ENCODE measurements at regions of chr20 and their contacts with region 1.

Region 1: GRCh38 chr20:58209652-58210397 is 18.6 kb downstream of the ANKRD60 start:
- DNase-seq: no peak
- H3K4me3 ChIP-seq: no peak overlapping the region
- H3K27me3 ChIP-seq: peaks cover 10% of the 10 kb centered on the region
- CTCF ChIP-seq: peak; percentile 100

Region 2: DNA sequence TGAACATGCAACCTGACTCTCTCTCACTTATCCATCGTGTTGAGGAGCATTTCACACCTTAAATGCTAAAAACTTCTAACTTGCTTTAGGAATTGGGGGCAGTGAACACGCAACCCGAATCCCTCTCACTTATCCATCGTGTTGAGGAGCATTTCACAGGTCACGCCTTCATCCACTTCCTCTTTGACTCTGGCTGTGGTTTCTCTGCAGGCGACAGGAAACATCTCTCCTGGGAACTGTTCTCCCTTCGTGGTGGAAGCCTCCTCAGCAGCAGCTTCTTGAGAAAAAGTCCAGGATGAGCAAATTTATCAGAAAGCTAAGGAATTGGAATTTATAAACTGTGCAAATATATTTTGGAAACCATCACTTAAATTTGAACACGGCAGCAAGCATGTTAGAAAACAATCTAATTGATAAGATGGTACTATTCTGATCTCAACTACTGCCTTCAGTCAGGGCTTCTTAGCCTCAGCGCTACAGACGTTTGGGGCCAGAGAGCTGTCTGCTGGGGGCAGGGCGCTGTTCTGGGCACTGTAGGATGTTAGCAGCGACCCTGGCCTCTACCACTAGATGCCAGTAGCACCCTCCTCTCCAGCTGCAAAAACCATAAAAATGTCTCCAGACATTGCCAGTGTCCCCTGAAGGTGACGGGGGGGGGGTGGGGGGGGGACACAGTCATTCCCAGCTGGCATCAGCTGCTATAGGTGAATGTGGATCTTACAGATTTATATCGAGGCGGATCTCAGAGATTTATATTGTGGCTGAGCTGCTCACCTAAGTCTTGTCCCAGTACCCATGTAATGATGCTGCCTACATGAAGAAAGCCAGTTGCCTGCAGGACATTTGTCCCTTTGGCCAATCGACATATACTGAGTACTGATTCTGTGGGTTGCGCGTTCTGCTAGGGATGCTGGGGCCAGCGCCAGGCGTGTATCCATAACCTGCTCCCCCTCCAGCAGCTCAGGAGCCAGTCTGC is 711.1 kb before region 1 on chr20:
- CTCF ChIA-PET with region 1: interaction called, 13 read pairs
- POLR2A ChIA-PET with region 1: no interaction called
- DNase-seq: no peak
- H3K4me3 ChIP-seq: no peak overlapping the region
- H3K27me3 ChIP-seq: no peaks in the 10 kb centered on the region; the same call in 1 of the 2 replicates
- CTCF ChIP-seq: peak; percentile 61

Region 3: GRCh38 chr20:57514273-57514751 is 695.5 kb before region 1 on chr20:
- CTCF ChIA-PET with region 1: interaction called, 21 read pairs
- POLR2A ChIA-PET with region 1: no interaction called
- DNase-seq: no peak
- H3K4me3 ChIP-seq: no peak overlapping the region
- H3K27me3 ChIP-seq: peaks cover 10% of the 10 kb centered on the region
- CTCF ChIP-seq: peak; percentile 79

Region 4: DNA sequence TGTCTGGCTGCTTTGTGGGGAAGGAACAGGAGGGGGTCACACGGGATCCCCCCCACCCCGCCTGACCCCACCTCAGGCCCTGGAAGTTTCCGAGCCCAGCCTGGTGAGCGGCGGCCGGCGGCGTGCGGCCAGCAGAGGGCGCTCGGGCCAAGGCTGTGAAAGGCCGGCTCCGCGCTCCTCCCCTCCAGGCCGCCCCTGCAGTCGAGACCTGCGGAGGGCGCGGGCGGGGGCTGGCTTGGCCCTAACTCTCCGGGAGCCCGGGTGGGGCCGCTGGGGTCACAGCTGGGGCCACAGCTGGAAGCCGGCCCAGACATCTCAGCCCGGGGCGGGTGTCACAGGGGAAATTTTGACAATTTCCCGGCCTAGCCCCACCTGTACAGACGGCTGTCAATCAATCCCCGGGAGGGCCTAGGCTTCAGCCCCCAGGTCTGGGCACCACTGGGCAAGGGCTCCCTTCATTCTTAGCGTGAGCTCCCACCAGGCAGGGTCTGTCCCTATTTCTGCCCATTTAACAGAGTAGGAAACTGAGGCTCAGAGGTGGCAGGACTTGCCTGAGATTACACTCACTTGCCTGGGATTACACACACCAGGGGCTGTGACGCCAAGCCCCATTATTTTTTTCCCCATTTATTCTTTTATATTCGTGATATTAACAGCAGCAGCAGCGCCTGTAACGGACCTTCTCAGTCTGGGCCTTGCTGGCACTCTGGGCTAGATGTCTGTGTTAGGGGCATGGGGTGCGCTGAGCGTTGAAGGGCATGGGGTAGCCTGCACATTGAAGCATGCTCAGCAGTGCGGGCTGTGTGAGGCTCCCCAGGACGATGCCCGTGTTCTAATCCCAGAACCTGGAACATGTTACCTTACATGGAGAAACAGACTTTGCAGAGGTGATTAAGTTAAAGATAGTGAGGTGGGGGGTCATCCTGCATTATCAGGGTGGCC is 612.6 kb before region 1 on chr20:
- CTCF ChIA-PET with region 1: interaction called, 222 read pairs
- POLR2A ChIA-PET with region 1: no interaction called
- DNase-seq: no peak
- H3K4me3 ChIP-seq: no peak overlapping the region
- H3K27me3 ChIP-seq: no peaks in the 10 kb centered on the region; the same call in none of the 2 replicates
- CTCF ChIP-seq: peak; percentile 76

Region 5: DNA sequence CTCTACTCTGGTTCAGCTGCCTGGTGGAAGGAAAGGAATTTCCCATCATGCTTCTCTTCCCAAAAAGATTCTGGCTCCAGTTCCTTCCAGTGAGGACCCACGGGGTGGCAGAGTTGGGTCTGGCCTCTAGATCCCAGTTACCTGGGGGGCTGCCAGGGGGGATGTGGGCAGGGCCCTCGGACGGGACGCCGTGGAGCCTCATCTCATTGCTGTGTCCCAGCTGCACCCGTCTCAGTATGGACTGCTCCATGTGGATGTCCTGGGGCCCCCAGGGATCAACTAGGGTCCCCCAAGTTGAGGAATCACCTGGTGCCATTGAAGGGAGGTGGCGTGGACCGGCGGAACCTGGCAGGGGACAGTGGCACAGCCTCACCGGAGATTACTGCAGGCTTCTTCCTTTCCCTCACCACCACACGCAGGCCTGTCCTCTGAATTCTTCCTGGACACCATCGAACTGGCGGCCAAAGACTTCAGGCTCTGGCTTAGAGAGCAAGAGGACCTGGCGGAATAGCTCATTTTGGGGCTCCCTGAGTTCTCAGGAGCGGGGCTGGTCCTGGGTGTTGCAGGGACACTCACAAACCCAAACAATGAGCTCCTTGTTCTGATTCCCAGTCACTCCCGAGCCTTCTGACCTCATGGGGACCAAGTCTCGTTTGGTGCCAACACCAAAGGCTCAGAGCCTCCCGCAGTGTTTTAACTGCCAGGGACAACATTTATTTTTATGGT is 598.1 kb before region 1 on chr20:
- CTCF ChIA-PET with region 1: interaction called, 16 read pairs
- POLR2A ChIA-PET with region 1: no interaction called
- DNase-seq: no peak
- H3K4me3 ChIP-seq: no peak overlapping the region
- H3K27me3 ChIP-seq: peaks cover 1% of the 10 kb centered on the region; the same call in 1 of the 2 replicates
- CTCF ChIP-seq: no peak

Region 6: GRCh38 chr20:57622579-57623377 is 587.0 kb before region 1 on chr20:
- CTCF ChIA-PET with region 1: interaction called, 11 read pairs
- POLR2A ChIA-PET with region 1: no interaction called
- DNase-seq: no peak
- H3K4me3 ChIP-seq: no peak overlapping the region
- H3K27me3 ChIP-seq: peaks cover 2% of the 10 kb centered on the region; the same call in 1 of the 2 replicates
- CTCF ChIP-seq: peak; percentile 77